ENCODE measurements at regions of chr1 and their contacts with region 1.

Region 1: GRCh38 chr1:92858564-92859399 is 26.9 kb downstream of the RPL5 start:
- DNase-seq: peak; percentile 53
- H3K4me3 ChIP-seq: no peak overlapping the region
- CTCF ChIP-seq: peak; percentile 74

Region 2: GRCh38 chr1:92795166-92795565 is 63.6 kb before region 1 on chr1:
- CTCF ChIA-PET with region 1: no interaction called
- POLR2A ChIA-PET with region 1: no interaction called
- DNase-seq: no peak
- H3K4me3 ChIP-seq: no peak overlapping the region
- CTCF ChIP-seq: no peak

Region 3: DNA sequence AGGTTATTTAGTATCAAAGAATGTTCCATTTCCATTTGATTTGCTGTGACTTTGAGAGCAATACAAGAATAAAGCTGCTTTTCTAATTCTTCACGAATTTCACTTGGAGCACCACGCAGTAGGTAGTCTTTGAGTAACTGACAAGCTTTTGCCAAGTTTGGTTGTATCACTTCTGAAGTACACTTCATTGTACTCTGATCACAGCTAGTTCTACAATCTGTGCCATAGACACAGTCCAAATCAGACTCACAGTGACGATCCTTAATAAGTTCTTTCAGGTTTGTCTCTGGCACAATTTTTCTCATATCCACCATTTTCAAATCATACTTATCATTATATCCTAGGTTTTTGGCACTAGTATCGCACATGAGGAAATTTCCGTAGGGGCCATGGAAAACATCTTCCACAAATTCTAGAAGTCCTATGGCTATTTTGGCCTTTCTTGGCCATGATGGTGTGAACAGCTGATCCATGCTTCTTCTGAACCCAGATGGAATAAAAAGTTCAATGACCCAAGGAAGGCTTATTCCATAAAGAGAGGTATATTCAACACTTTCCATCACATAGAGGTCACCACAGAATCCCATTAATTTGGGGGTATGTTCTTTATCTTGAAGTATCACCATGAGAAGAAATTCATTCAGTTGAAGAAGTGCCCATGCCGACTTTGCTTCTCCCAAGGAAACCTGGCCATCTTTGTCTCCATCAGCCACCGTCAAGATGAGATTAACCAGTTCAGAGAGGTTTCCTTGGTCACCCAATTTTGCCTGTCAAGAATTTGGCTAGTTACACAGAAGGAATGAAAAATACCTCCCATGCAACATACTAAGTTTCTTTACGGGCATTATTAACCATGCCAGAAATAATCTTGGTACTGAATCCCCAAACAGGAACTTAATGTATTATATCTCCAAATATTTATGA is 15.1 kb before region 1 on chr1:
- CTCF ChIA-PET with region 1: interaction called, 25 read pairs
- POLR2A ChIA-PET with region 1: interaction called, 3 read pairs
- DNase-seq: no peak
- H3K4me3 ChIP-seq: no peak overlapping the region
- CTCF ChIP-seq: no peak

Region 4: DNA sequence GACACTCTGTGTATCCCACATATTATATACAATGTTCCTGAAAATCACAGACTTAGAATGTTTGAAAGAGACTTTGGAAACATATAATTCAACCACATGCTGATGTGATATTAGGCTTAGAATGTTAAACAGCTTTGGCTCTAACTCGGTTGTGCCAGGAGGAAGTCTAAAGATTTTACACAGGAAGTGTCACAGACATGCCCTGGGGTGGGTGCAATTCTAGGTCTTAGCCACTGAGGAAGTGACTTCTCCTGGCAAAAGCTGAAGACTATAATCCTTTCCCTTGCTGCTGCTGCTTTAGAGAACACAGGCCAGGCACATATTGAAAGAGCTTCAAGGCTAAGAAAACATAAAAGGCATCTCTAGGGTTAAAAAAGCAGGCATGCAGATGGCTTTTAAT is 24.0 kb after region 1 on chr1:
- CTCF ChIA-PET with region 1: interaction called, 51 read pairs
- POLR2A ChIA-PET with region 1: no interaction called
- DNase-seq: no peak
- H3K4me3 ChIP-seq: no peak overlapping the region
- CTCF ChIP-seq: no peak

Region 5: GRCh38 chr1:92951141-92951582 is 92.4 kb after region 1 on chr1:
- CTCF ChIA-PET with region 1: interaction called, 43 read pairs
- POLR2A ChIA-PET with region 1: no interaction called
- DNase-seq: no peak
- H3K4me3 ChIP-seq: no peak overlapping the region
- CTCF ChIP-seq: no peak

Region 6: DNA sequence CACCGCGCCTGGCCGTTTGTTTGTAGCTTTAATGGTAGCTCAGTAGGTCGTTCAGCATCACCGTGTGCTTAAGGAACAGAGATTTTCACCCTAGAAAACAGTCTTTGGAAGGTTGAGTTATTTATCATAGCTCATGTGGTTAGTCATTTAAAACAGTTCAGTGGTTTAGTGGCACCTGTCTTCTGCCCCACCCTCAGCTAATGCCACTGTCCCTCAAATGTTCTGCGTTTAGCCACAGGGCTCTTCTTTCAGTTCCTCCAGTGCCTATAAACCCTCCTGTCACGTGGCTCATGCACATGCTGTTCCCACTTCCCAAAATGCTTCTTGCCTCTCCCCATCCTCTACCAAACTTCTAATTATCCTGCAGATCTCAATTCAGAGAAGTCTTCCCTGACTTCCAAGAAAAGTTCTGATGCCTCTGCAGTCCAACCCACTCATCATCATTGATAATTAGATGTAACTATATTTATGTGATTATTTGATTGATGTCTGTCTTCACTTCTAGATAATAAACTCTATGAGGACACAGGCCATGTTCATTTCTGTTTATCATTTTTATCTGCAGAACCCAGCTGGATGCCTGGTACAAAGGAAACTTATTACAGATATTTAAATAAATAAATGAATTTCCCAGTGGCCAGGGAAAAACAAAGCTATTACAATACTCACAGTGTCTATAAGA is 116.9 kb after region 1 on chr1:
- CTCF ChIA-PET with region 1: interaction called, 24 read pairs
- POLR2A ChIA-PET with region 1: no interaction called
- DNase-seq: no peak
- H3K4me3 ChIP-seq: no peak overlapping the region
- CTCF ChIP-seq: no peak

Region 7: DNA sequence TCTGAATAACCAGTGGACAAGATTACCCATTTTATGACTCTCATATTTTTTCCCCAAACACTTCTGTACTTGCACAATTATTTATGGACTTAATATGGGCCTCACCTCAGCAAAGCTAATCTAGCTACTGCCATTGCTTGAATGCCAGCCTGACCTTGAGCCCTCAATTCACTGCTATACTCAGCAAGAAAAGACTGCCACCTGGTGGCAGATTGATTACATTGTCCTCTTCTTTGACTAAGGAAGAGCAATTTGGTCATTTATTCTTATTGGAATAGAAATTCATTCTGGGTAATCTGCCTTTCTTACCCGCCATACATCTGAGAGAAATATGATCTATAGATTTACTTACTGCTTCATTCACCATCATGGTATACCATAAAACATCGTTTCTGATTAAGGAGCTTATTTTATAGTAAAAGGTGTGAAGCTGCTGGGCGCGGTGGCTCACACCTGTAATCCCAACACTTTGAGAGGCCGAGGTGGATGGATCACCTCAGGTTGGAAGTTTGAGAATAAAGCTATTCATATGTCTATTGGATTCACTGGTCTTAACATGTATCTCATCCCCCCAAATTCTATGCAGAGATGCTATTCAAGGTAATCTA is 135.4 kb after region 1 on chr1:
- CTCF ChIA-PET with region 1: interaction called, 493 read pairs
- POLR2A ChIA-PET with region 1: interaction called, 3 read pairs
- DNase-seq: peak; percentile 46
- H3K4me3 ChIP-seq: no peak overlapping the region
- CTCF ChIP-seq: peak; percentile 55

Region 8: DNA sequence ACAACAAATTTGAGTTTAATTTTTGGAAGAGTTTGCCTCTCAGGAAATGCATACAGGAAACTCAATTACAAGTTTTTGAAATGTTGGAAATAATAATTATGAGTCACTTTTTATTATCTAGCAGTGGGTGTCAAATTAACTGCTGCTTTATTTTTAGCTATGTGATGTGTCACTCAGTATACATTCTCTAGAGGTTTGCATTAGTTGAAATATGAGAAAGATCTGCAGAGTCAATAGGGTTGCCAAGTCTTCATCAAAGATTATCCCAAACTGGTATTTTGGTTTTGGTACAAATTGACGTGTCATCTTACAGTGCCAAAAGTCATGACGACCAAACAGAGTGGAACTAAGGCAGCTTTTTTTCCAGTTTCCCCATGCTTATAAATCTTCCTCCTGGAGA is 156.8 kb after region 1 on chr1:
- CTCF ChIA-PET with region 1: interaction called, 19 read pairs
- POLR2A ChIA-PET with region 1: no interaction called
- DNase-seq: peak; percentile 24
- H3K4me3 ChIP-seq: no peak overlapping the region
- CTCF ChIP-seq: no peak